ENCODE measurements at regions of chr3 and their contacts with region 1.

Region 1: DNA sequence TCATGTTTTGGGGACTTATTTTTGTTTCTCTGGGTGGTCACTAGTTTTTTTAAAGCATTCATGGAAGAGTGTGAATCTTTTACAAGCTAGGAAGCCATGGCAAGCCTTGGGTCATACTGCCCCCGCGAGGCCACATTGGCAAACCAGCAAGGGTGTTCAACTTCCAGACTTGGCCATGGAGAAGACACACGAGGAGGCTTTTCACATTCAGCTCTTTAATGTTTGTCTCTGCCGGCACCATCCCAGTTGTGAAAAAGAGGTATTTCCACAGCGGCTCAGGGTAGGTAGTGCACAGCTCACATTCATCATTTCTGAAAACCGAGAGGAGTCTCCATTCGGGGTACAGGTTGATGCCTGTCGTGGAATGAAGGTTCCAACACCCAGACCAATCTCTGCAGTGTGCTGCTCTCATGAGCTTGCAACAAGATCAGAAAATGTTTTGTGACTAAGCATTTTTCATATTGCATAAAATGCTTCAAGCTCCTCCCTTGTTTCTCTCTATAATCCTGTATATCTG is 7.7 kb downstream of the CCR5 start:
- DNase-seq: peak; percentile 43 to 50
- ATAC-seq: peak in 1 of 2 donors; percentile 37
- H3K4me3 ChIP-seq: no peak overlapping the region
- H3K27ac ChIP-seq: no peak overlapping the region
- H3K4me1 ChIP-seq: peaks cover 17 to 19% of the 10 kb centered on the region in 2 donors
- H3K27me3 ChIP-seq: no peaks in the 10 kb centered on the region
- CTCF ChIP-seq: peak; percentile 9 to 54 (median 46)
- POLR2A ChIP-seq: no peak

Region 2: DNA sequence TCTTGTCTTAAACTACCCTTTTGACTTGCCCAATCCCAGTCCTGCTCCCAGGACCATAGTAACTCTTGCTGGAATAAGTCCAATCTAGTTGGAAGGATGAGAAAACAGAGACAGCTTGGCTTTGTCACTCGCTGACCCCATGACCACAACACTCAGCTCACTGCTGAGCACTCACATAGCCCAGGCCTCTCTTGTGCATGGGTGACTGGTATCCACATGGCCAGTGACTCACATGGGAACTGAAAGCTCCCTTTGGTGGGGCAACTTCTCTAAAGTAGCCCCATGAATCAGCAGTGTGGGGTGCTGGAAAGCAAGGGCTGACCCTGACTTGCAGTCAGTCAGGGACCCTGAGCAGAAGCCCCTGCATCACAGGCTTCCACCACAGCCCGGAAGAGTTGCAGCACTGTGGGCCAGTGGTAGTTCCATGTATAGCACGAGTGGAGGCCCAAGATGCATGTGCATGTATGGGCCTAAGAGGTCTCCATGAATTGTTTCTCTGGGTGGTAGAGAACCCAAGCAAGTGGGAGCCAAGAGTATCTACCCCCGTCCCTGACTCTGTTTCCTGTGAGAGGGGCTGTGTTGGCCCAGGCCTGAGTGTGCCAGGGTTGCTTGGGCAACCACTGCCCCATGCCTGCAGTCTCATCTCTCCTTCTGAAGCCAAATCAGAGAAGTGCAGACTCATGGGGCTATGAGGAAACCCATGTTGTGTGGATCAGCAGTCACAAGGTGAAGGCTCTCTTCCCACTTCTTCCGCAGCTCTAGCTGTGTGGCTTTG is 289.1 kb before region 1 on chr3:
- in situ Hi-C with region 1: loop called in 1 of 4 experiments (anchors 25 kb)
- intact Hi-C with region 1: loop called (anchors 10 kb)
- DNase-seq: peak; percentile 41 to 54
- ATAC-seq: peak; percentile 40 to 63
- H3K4me3 ChIP-seq: no peak overlapping the region
- H3K27ac ChIP-seq: peak overlapping the region in 1 of 4 donors; percentile 42
- H3K4me1 ChIP-seq: no peaks in the 10 kb centered on the region
- H3K27me3 ChIP-seq: no peaks in the 10 kb centered on the region
- CTCF ChIP-seq: no peak
- POLR2A ChIP-seq: no peak

Region 3: GRCh38 chr3:46407970-46408369 is 29.5 kb after region 1 on chr3:
- in situ Hi-C with region 1: no loop called
- intact Hi-C with region 1: loop called (anchors 2 kb)
- DNase-seq: peak; percentile 78 to 84
- ATAC-seq: peak; percentile 96 to 97
- H3K4me3 ChIP-seq: peak overlapping the region; percentile 36 to 38 (median 37)
- H3K27ac ChIP-seq: peak overlapping the region; percentile 77 to 86 (median 78)
- H3K4me1 ChIP-seq: peaks cover 18 to 27% of the 10 kb centered on the region in 2 donors
- H3K27me3 ChIP-seq: no peaks in the 10 kb centered on the region
- CTCF ChIP-seq: no peak
- POLR2A ChIP-seq: peak in 1 of 2 donors; percentile 10

Measured in gastrocnemius medialis (tissue), 4 donors.